PC-9 (cell line): ENCODE measurements at regions of chr18 and their contacts with region 1.

Region 1: DNA sequence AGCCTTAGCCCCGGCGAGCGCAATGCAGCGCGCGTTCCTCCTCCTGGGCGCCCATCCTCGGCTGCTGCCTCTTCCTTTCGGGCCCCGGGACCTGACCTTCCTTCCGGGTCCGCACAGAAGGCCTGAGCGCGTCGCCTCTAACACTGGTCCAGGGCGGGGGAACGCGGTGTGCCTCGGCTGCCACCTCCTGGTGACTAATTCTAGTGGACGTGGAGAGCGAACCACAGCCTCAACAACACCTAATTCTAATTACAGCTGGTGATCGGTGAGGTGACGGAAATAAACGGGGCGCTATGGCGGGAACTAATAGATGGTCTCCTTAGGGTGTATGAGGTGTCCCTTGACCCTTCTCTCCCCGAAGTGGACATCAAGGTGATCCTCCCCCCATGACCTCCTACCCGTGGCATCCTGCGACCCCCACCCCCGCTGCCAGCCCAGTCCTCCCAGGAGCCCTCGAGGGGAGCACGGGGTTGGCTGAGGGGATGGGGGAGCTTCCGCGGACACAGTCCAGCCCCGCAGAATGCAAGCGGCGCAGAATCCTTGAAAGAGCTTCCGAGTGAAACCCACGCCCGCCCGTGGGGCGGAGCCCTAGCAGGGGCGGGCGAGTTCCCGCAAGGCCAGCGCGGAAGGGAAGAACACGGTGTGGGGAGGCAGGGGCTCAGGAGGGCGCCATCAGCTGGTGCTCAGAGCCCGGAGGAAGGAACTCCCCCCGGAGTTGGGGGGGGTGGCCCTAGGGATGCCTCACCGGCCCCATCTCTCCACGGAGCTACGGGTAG is 12.8 kb upstream of the HMSD start:
- DNase-seq: peak; percentile 60 to 72
- H3K4me3 ChIP-seq: peak overlapping the region; percentile 44; the same call in 1 of the 2 replicates
- H3K27ac ChIP-seq: no peak overlapping the region
- H3K4me1 ChIP-seq: no peaks in the 10 kb centered on the region
- H3K27me3 ChIP-seq: no peaks in the 10 kb centered on the region
- CTCF ChIP-seq: peak; percentile 69

Region 2: DNA sequence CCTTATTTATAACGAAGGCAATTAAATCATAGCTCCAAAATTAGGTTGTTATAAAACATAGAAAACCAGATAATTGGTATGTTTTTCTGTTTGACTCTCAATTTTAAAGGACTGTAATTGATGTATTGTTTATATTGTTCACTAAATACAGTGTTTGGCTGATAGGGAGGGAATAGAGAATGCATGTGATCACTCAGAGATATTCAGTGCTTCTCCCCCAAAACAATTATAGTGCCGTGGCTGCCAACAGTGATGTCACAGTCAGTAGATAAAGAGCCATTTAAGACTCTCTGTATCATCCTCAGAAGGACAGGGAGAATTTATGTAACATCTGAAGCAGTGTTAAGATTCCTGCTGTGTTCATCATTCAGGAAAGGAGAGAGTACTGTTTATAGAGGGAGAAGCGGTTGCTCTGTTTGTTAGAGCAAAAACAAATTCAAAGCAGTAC is 1151.4 kb before region 1 on chr18:
- CTCF ChIA-PET with region 1: interaction called, 10 read pairs
- POLR2A ChIA-PET with region 1: no interaction called
- intact Hi-C with region 1: no loop called
- DNase-seq: no peak
- H3K4me3 ChIP-seq: no peak overlapping the region
- H3K27ac ChIP-seq: no peak overlapping the region
- H3K4me1 ChIP-seq: peaks cover 44% of the 10 kb centered on the region
- H3K27me3 ChIP-seq: no peaks in the 10 kb centered on the region
- CTCF ChIP-seq: no peak

Region 3: DNA sequence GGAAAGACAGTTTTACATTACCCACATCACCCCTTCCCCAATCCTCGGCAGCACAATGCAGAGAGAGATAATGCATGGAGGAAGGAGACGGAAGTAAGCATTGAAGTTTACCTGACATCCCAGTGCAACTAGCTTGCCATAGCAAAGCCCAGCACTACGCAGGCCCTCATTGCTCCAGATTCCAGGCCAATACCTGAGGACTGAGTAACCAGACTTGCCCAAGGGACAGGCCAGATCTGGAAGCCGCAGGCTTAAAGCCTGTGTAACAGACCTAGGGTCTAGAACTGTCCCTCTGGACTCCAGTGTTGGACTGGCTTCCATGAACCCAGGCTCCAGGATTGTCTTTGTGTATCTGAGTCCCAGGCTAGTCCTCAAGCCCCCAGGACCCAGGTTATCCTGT is 309.9 kb before region 1 on chr18:
- CTCF ChIA-PET with region 1: no interaction called
- POLR2A ChIA-PET with region 1: no interaction called
- intact Hi-C with region 1: no loop called
- DNase-seq: no peak
- H3K4me3 ChIP-seq: no peak overlapping the region
- H3K27ac ChIP-seq: no peak overlapping the region
- H3K4me1 ChIP-seq: no peaks in the 10 kb centered on the region
- H3K27me3 ChIP-seq: no peaks in the 10 kb centered on the region
- CTCF ChIP-seq: no peak

Region 4: DNA sequence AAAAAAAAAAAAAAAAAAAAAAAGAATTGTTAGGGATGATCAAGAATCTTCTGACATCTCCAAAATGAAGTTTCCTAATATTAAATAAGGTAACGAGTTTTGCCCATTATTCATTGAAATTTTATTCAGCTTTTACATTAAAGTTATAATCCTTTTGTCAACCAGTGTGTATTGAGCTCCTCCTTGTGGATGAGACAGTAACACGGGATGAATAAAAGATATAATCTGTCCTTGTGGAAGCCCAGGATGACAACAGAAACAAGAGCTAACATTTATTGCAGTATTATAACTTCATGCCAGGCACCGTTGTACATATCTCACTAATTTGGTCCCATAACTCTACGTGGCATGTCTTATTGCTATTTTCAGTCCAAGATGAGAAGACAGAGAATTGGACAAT is 194.6 kb before region 1 on chr18:
- CTCF ChIA-PET with region 1: no interaction called
- POLR2A ChIA-PET with region 1: no interaction called
- intact Hi-C with region 1: loop called (anchors 5 kb)
- DNase-seq: no peak
- H3K4me3 ChIP-seq: no peak overlapping the region
- H3K27ac ChIP-seq: no peak overlapping the region
- H3K4me1 ChIP-seq: peaks cover 19% of the 10 kb centered on the region
- H3K27me3 ChIP-seq: no peaks in the 10 kb centered on the region
- CTCF ChIP-seq: peak; percentile 73

Region 5: GRCh38 chr18:63757541-63757940 is 178.8 kb before region 1 on chr18:
- CTCF ChIA-PET with region 1: no interaction called
- POLR2A ChIA-PET with region 1: no interaction called
- intact Hi-C with region 1: no loop called
- DNase-seq: no peak
- H3K4me3 ChIP-seq: no peak overlapping the region
- H3K27ac ChIP-seq: no peak overlapping the region
- H3K4me1 ChIP-seq: no peaks in the 10 kb centered on the region
- H3K27me3 ChIP-seq: no peaks in the 10 kb centered on the region
- CTCF ChIP-seq: no peak

Region 6: GRCh38 chr18:63882333-63883141 is 53.8 kb before region 1 on chr18:
- CTCF ChIA-PET with region 1: no interaction called
- POLR2A ChIA-PET with region 1: no interaction called
- intact Hi-C with region 1: loop called (anchors 1 kb)
- DNase-seq: peak; percentile 61 to 96
- H3K4me3 ChIP-seq: no peak overlapping the region
- H3K27ac ChIP-seq: peak overlapping the region; percentile 54; the same call in 1 of the 2 replicates
- H3K4me1 ChIP-seq: peaks cover 14% of the 10 kb centered on the region; the same call in 1 of the 2 replicates
- H3K27me3 ChIP-seq: no peaks in the 10 kb centered on the region
- CTCF ChIP-seq: no peak